CD8-positive, alpha-beta T cell (primary cell): ENCODE measurements at regions of chr3 and their contacts with region 1.

Region 1: GRCh38 chr3:168950622-168951021 is 712.9 kb downstream of the MECOM start:
- DNase-seq: no peak
- ATAC-seq: no peak
- H3K4me3 ChIP-seq: no peak overlapping the region
- H3K4me3 Mint-ChIP-seq: no peak overlapping the region
- H3K27ac ChIP-seq: no peak overlapping the region
- H3K27ac Mint-ChIP-seq: no peak overlapping the region
- H3K4me1 ChIP-seq: no peaks in the 10 kb centered on the region
- H3K4me1 Mint-ChIP-seq: no peaks in the 10 kb centered on the region
- H3K27me3 ChIP-seq: no peaks in the 10 kb centered on the region
- H3K27me3 Mint-ChIP-seq: no peaks in the 10 kb centered on the region
- CTCF ChIP-seq: no peak

Region 2: GRCh38 chr3:168722091-168722490 is 228.5 kb before region 1 on chr3:
- CTCF ChIA-PET with region 1: no interaction called
- POLR2A ChIA-PET with region 1: no interaction called
- intact Hi-C with region 1: no loop called
- DNase-seq: no peak
- ATAC-seq: no peak
- H3K4me3 ChIP-seq: no peak overlapping the region
- H3K4me3 Mint-ChIP-seq: no peak overlapping the region
- H3K27ac ChIP-seq: no peak overlapping the region
- H3K27ac Mint-ChIP-seq: no peak overlapping the region
- H3K4me1 ChIP-seq: no peaks in the 10 kb centered on the region
- H3K4me1 Mint-ChIP-seq: no peaks in the 10 kb centered on the region
- H3K27me3 ChIP-seq: no peaks in the 10 kb centered on the region
- H3K27me3 Mint-ChIP-seq: no peaks in the 10 kb centered on the region
- CTCF ChIP-seq: no peak

Region 3: GRCh38 chr3:168983046-168983445 is 32.4 kb after region 1 on chr3:
- CTCF ChIA-PET with region 1: no interaction called
- POLR2A ChIA-PET with region 1: no interaction called
- intact Hi-C with region 1: loop called in 1 of 2 experiments (anchors 1 kb)
- DNase-seq: no peak
- ATAC-seq: no peak
- H3K4me3 ChIP-seq: no peak overlapping the region
- H3K4me3 Mint-ChIP-seq: no peak overlapping the region
- H3K27ac ChIP-seq: no peak overlapping the region
- H3K27ac Mint-ChIP-seq: no peak overlapping the region
- H3K4me1 ChIP-seq: no peaks in the 10 kb centered on the region
- H3K4me1 Mint-ChIP-seq: no peaks in the 10 kb centered on the region
- H3K27me3 ChIP-seq: no peaks in the 10 kb centered on the region
- H3K27me3 Mint-ChIP-seq: no peaks in the 10 kb centered on the region
- CTCF ChIP-seq: no peak